Head of caudate nucleus (tissue), 42 donors: ENCODE measurements at regions of chr12 and their contacts with region 1.

Region 1: GRCh38 chr12:88141770-88142609 is at the starts of genes CEP290 and TMTC3:
- DNase-seq: peak; percentile 94 to 99 (median 98)

Region 2: DNA sequence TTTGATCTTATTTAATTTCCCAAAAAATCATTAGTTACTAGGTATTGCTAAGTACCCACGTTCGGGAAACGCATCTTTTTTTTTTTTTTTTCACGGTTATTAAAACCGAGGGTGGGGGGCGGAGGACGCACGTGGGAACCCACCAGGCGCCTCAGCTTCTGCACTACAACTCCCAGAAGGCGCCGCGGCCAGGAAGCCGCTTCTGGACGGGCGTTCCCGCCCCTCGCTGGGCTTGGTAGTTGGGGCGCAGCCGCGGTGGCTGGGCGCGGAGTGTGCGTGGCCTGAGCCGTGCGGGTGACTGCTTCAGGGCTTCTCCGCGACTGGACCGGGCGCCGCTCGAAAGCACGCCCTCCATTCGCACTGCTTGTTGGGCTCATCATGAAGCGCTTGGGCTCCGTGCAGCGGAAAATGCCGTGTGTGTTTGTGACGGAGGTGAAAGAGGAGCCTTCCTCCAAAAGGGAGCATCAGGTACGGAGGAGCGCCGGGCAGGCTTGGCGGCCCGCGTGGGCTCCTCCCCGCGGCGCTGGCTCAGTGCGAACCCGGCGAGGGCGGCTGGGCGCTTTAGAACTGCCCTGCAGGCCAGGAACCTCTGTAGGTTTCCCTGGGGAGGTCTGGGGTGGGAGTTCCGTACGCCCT is 106.6 kb before region 1 on chr12:
- intact Hi-C with region 1: loop called (anchors 5 kb)
- DNase-seq: peak; percentile 87 to 98 (median 95)

Region 3: DNA sequence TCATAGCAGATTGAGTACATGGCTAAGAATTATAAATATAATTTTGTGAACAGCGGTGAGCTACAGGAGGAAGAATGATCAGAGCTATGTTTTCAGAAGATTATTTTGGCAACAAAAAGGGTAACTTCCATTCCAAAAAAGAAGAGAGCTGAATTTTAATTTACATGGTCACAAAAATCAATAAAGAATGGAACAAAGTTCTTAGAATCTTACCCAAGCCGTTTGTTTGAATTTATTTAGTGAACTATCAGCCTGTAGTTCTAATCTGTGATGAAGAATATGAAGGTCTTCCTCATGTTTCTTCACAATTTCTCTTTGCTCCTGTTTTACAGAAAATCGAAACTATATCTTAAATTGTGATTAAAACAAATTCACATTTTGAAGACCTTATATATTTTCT is 58.4 kb before region 1 on chr12:
- intact Hi-C with region 1: no loop called
- DNase-seq: no peak

Region 4: DNA sequence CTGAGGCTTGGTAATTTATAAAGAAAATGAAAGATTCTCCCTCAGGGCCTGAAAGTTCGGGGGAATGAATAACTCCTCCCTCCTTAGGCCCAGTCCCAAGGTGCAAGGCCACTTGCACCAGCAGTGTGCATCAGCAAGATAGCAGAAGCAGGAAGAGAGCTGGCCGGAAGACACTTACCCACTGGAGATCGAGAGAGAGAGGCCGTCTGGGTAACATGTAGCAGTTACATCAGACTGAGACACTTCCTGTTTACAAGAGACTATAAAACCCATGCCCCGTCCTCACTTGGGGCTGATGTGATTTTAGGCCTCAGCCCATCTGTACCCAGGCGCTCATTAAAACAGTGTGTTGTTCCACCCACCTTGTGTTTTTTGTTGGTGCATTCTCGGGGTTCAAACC is 85.3 kb after region 1 on chr12:
- intact Hi-C with region 1: no loop called
- DNase-seq: no peak